PC-3 (cell line): ENCODE measurements at regions of chr9 and their contacts with region 1.

Region 1: DNA sequence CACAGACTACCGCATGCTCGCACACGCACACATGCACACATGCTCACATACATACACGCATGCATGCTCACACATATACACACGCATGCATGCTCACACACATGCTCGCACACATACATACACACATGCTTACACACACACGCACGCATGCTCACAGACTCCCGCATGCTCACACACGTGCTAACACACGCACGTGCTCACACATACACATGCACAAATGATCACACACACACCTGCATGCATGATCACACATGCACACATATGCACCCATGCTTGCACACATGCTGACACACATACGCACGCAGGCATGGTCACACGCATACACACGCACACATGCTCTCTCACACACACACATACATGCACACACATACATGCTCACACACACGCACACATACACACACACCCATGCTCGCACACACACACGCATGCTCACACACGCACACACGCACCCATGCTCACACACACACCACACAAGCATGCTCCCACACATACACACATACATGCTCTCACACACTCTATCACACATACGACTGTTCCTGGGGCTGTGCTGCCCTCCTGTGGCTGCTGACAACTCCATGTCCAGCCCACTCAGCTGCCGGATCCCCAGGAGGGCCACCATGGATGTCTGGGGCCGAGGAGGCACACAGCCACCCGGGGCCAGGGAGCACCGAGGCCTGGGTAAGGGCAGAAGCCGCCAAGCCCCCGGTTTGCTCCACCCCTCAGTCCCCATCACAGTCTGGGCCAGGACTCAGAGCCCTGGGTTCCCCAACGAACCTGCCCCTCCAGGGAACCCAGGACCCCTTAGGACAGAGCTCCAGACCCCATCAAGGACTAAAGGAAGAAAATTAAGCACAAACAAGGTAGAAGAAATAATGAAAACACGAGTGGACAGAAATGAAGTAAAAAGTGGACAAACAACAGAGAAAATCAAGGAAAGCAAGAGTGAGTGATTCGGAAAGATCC is 31.4 kb upstream of the EGFL7 start:
- DNase-seq: peak; percentile 72
- ATAC-seq: peak; percentile 86
- H3K4me3 ChIP-seq: no peak overlapping the region
- H3K27ac ChIP-seq: no peak overlapping the region
- H3K4me1 ChIP-seq: peaks cover 14% of the 10 kb centered on the region; the same call in 1 of the 2 replicates
- H3K27me3 ChIP-seq: no peaks in the 10 kb centered on the region
- CTCF ChIP-seq: peak; percentile 79

Region 2: GRCh38 chr9:136488247-136489214 is 142.8 kb before region 1 on chr9:
- CTCF ChIA-PET with region 1: interaction called, 4 read pairs
- POLR2A ChIA-PET with region 1: no interaction called
- intact Hi-C with region 1: loop called (anchors 1 kb)
- DNase-seq: peak; percentile 72
- ATAC-seq: peak; percentile 31; the same call in 1 of the 2 replicates
- H3K4me3 ChIP-seq: no peak overlapping the region
- H3K27ac ChIP-seq: no peak overlapping the region
- H3K4me1 ChIP-seq: peaks cover 3% of the 10 kb centered on the region; the same call in 1 of the 2 replicates
- H3K27me3 ChIP-seq: no peaks in the 10 kb centered on the region
- CTCF ChIP-seq: peak; percentile 86

Region 3: GRCh38 chr9:136539427-136540421 is 91.6 kb before region 1 on chr9:
- CTCF ChIA-PET with region 1: no interaction called
- POLR2A ChIA-PET with region 1: no interaction called
- intact Hi-C with region 1: no loop called
- DNase-seq: peak; percentile 94
- ATAC-seq: peak; percentile 94
- H3K4me3 ChIP-seq: peak overlapping the region; percentile 23; the same call in 1 of the 2 replicates
- H3K27ac ChIP-seq: peak overlapping the region; percentile 74
- H3K4me1 ChIP-seq: peaks cover 25% of the 10 kb centered on the region
- H3K27me3 ChIP-seq: no peaks in the 10 kb centered on the region
- CTCF ChIP-seq: no peak

Region 4: DNA sequence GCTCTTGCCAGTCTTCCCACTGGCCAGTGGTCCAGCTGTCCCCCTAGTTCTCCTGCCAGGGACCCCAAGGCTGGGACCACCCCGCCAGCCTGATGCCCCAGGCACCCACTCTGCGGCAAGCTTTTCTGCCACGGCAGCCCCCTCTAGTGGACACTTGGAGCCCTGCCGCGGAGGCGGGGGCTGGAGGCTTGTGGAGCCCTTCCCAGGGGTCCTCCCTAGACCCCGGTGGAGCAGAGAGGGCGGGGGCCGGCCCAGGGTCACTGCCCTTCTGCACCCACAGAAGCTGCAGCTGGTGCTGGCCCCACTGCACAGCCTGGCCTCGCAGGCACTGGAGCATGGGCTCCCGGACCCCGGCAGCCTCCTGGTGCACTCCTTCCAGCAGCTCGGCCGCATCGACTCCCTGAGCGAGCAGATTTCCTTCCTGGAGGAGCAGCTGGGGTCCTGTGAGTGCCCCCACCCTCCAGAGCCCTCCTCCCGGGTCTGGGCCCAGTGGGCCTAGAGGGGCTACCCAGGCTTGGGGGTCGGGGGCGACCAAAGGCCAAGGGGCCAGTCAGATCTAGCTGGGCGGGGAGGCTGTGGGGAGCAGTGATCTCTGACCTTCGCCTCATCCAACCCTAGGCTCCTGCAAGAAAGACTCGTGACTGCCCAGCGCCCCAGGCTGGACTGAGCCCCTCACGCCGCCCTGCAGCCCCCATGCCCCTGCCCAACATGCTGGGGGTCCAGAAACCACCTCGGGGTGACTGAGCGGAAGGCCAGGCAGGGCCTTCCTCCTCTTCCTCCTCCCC is 40.5 kb after region 1 on chr9:
- CTCF ChIA-PET with region 1: no interaction called
- POLR2A ChIA-PET with region 1: no interaction called
- intact Hi-C with region 1: no loop called
- DNase-seq: peak; percentile 18
- ATAC-seq: peak; percentile 35
- H3K4me3 ChIP-seq: no peak overlapping the region
- H3K27ac ChIP-seq: no peak overlapping the region
- H3K4me1 ChIP-seq: no peaks in the 10 kb centered on the region
- H3K27me3 ChIP-seq: no peaks in the 10 kb centered on the region
- CTCF ChIP-seq: peak; percentile 77